MCF 10A (cell line): ENCODE measurements at regions of chr1 and their contacts with region 1.

Region 1: DNA sequence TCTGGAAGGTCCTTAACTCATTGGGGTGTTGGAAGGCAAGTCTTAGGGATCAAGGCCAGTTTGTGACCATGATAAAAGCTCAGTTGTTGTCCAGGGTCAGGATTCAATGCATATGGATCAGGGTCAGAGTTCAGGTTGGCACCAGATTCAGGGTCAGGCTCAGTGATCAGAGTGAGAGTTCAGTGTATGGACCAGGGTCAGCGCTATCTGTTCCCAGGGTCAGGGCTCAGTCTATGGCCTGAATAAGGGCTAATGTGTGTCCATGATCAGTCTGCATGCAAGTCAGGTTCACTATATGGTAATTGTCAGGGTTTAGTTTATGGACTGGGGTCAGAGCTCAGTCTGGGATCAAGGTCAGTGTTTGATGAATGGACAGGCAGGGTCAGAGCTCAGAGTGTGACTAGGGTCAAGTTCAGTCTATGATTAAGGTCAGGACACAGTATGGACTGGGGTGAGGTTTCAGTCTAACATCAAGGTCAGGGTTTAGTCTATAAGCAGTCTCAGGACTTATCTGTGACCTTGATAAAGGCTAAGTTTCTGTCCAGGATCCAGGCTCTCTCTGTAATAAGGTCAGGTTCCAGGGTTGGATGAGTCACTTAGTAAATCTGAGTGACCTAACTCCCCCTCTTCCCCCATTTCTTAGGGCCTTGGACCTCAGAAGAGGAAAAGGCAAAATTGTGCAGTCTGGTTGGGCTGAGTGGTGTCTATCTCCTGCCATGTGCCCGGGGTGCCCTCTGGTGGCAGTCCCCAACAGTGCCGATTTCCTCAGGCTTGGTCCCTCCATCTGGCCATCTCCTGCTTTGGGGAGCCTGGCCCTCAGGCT is 23.8 kb downstream of the KNCN start:
- DNase-seq: peak; percentile 84
- H3K4me3 Mint-ChIP-seq: no peak overlapping the region
- H3K27ac Mint-ChIP-seq: no peak overlapping the region
- H3K4me1 Mint-ChIP-seq: peaks cover 16% of the 10 kb centered on the region
- H3K27me3 Mint-ChIP-seq: peaks cover 14% of the 10 kb centered on the region
- CTCF ChIP-seq: peak; percentile 92

Region 2: GRCh38 chr1:45979074-45979777 is 548.5 kb before region 1 on chr1:
- CTCF ChIA-PET with region 1: no interaction called
- POLR2A ChIA-PET with region 1: no interaction called
- intact Hi-C with region 1: no loop called
- DNase-seq: peak; percentile 34
- H3K4me3 Mint-ChIP-seq: no peak overlapping the region
- H3K27ac Mint-ChIP-seq: peak overlapping the region; percentile 86
- H3K4me1 Mint-ChIP-seq: peaks cover 9% of the 10 kb centered on the region
- H3K27me3 Mint-ChIP-seq: no peaks in the 10 kb centered on the region
- CTCF ChIP-seq: no peak

Region 3: DNA sequence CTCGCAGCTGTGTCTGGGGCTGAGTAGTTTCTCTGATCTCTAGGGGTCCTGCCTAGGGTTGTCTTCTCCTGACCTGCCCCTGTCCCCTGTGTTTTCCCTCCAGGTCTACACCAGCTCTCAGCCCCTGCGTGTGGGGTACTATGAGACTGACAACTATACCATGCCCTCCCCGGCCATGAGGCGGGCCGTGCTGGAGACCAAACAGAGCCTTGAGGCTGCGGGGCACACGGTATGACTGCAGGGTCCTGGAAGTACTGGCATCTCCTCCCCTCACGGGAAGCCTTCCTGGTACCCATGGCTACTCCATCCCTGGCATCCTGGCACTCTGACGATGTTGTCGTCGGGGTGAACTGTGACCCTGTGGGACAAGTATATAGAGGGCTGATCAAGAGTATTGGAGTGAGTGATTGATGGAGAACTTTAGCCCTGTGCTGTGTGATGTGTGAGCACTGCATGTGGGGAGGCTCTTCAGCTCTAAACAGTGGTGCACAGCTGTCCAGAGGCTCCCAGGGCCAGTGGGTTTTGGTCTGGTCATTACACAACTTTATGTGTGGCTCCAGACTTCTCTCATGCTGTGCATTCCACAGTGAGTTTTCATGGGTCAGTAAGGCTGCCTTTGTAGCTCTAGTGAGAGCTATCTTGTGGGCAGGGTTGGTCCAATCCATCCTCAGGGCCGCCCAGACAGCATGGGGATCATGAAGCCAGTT is 119.2 kb before region 1 on chr1:
- CTCF ChIA-PET with region 1: interaction called, 12 read pairs
- POLR2A ChIA-PET with region 1: no interaction called
- intact Hi-C with region 1: loop called (anchors 1 kb)
- DNase-seq: no peak
- H3K4me3 Mint-ChIP-seq: no peak overlapping the region
- H3K27ac Mint-ChIP-seq: no peak overlapping the region
- H3K4me1 Mint-ChIP-seq: peaks cover 3% of the 10 kb centered on the region
- H3K27me3 Mint-ChIP-seq: no peaks in the 10 kb centered on the region
- CTCF ChIP-seq: no peak

Region 4: GRCh38 chr1:46503421-46503820 is 24.3 kb before region 1 on chr1:
- CTCF ChIA-PET with region 1: interaction called, 33 read pairs
- POLR2A ChIA-PET with region 1: no interaction called
- intact Hi-C with region 1: no loop called
- DNase-seq: no peak
- H3K4me3 Mint-ChIP-seq: no peak overlapping the region
- H3K27ac Mint-ChIP-seq: no peak overlapping the region
- H3K4me1 Mint-ChIP-seq: no peaks in the 10 kb centered on the region
- H3K27me3 Mint-ChIP-seq: peaks cover 22% of the 10 kb centered on the region
- CTCF ChIP-seq: no peak

Region 5: GRCh38 chr1:46539972-46540371 is 12.3 kb after region 1 on chr1:
- CTCF ChIA-PET with region 1: interaction called, 68 read pairs
- POLR2A ChIA-PET with region 1: interaction called, 8 read pairs
- intact Hi-C with region 1: no loop called
- DNase-seq: peak; percentile 77
- H3K4me3 Mint-ChIP-seq: no peak overlapping the region
- H3K27ac Mint-ChIP-seq: no peak overlapping the region
- H3K4me1 Mint-ChIP-seq: peaks cover 18% of the 10 kb centered on the region
- H3K27me3 Mint-ChIP-seq: peaks cover 50% of the 10 kb centered on the region
- CTCF ChIP-seq: no peak